ENCODE measurements at regions of chr9 and their contacts with region 1.

Region 1: DNA sequence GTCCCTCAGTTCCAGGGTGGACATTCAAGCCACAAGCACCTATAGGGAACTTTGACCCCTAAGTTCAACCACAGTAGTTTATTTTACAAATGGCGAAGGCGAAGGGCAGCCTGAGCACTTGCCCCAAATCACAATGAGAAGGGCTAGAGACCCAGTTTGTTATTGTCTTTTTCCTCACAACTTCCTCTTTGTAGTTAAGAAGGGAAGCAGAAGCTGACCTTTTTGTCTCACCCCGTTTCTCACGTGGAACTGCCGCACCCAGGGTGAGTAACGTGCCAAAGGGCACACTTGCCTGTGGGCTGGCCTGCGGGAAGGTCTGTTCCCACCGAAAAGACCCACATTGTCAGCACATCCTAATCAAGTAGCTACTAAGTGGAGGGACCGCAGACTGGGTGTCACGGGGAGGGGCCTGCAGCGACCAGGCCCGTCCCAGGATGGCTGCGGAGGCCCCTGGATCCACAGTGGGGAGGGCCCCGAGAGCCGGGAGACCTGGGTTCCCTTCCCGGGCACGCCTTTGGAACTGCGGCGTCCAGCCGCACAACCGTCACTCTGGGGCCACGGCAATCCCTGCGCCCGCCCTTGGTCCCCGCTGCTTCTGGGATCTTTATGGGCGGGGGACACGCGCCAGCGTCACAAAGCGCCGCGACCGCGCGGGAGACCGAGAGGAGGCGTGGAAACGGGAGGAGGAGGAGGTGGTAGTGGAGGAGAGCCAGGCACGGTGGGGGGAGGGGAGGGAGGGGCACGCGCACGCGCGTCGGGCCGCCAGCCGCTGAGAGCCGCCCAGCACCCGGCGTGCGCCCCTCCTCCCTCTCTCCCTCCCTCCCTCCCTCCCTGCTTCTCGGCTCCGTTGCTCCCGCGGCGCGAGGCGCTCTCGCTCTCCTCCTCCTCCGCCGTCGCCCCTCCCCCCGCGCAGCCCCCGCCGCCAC is at the start of gene UBE2R2:
- DNase-seq: peak; percentile 97
- ATAC-seq: peak; percentile 73
- H3K4me3 ChIP-seq: peak within 1 kb of the TSS; percentile 68 to 85 (median 78)
- H3K4me3 Mint-ChIP-seq: peak within 1 kb of the TSS; percentile 98
- H3K27ac ChIP-seq: peak within 1 kb of the TSS; percentile 99
- H3K27ac Mint-ChIP-seq: peak within 1 kb of the TSS; percentile 100
- H3K4me1 ChIP-seq: peaks cover 46 to 52% of the 10 kb centered on the region in 2 donors
- H3K4me1 Mint-ChIP-seq: peaks cover 64% of the 10 kb centered on the region
- H3K27me3 ChIP-seq: no peaks in the 10 kb centered on the region
- H3K27me3 Mint-ChIP-seq: no peaks in the 10 kb centered on the region
- CTCF ChIP-seq: no peak
- total RNA-seq, gene UBE2R2: 46.0 and 48.8 TPM in 2 replicates

Region 2: GRCh38 chr9:33623658-33624586 is 192.7 kb before region 1 on chr9:
- CTCF ChIA-PET with region 1: interaction called, 11 read pairs
- POLR2A ChIA-PET with region 1: no interaction called
- intact Hi-C with region 1: no loop called
- DNase-seq: peak; percentile 82
- ATAC-seq: peak; percentile 92
- H3K4me3 ChIP-seq: no peak overlapping the region
- H3K4me3 Mint-ChIP-seq: no peak overlapping the region
- H3K27ac ChIP-seq: no peak overlapping the region
- H3K27ac Mint-ChIP-seq: no peak overlapping the region
- H3K4me1 ChIP-seq: no peaks in the 10 kb centered on the region
- H3K4me1 Mint-ChIP-seq: no peaks in the 10 kb centered on the region
- H3K27me3 ChIP-seq: peaks cover 0 to 13% (median 7%) of the 10 kb centered on the region in 4 experiments
- H3K27me3 Mint-ChIP-seq: peaks cover 40% of the 10 kb centered on the region
- CTCF ChIP-seq: peak; percentile 87

Region 3: DNA sequence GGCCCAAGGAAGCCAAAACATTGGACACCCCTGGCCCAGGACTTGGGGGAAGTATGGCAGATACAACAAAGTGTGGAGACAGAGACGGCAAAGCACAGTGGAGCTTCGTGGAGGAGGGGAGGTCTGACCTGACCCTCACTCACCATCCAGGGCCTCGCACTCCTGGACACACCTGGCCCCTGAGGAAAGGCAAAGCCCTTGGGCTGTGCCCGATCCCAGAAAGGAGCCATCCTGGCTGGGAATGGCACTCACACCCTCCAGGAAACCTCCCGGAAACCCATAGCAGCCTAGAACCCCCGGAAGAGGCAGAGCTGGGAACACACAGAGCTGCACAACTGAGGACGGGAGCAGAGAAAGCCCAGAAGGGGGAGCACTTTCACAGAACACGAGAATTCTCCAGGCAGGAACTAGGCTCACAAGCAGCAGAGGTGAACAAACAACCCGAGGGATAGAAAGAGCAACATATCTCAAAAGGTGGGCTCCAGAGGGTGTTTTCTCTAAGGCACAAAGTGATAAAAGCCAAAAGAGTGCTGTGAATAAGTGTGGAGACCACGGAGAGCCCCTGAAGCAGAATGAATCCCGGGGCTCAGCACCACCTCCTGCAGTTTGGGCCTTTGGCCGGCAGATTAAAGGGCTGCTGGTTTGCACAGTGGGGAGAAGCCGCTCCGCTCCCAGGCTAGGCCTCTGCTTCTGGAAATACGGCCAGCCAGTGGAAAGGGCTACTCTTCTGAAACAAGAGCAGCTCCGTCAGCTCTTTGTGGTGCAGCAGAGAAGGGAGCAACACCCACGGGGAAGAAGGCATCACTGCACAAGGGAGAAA is 108.6 kb after region 1 on chr9:
- CTCF ChIA-PET with region 1: interaction called, 14 read pairs
- POLR2A ChIA-PET with region 1: no interaction called
- intact Hi-C with region 1: loop called (anchors 5 kb)
- DNase-seq: peak; percentile 35
- ATAC-seq: no peak
- H3K4me3 ChIP-seq: no peak overlapping the region
- H3K4me3 Mint-ChIP-seq: no peak overlapping the region
- H3K27ac ChIP-seq: no peak overlapping the region
- H3K27ac Mint-ChIP-seq: no peak overlapping the region
- H3K4me1 ChIP-seq: no peaks in the 10 kb centered on the region
- H3K4me1 Mint-ChIP-seq: no peaks in the 10 kb centered on the region
- H3K27me3 ChIP-seq: no peaks in the 10 kb centered on the region
- H3K27me3 Mint-ChIP-seq: no peaks in the 10 kb centered on the region
- CTCF ChIP-seq: peak; percentile 18

Region 4: DNA sequence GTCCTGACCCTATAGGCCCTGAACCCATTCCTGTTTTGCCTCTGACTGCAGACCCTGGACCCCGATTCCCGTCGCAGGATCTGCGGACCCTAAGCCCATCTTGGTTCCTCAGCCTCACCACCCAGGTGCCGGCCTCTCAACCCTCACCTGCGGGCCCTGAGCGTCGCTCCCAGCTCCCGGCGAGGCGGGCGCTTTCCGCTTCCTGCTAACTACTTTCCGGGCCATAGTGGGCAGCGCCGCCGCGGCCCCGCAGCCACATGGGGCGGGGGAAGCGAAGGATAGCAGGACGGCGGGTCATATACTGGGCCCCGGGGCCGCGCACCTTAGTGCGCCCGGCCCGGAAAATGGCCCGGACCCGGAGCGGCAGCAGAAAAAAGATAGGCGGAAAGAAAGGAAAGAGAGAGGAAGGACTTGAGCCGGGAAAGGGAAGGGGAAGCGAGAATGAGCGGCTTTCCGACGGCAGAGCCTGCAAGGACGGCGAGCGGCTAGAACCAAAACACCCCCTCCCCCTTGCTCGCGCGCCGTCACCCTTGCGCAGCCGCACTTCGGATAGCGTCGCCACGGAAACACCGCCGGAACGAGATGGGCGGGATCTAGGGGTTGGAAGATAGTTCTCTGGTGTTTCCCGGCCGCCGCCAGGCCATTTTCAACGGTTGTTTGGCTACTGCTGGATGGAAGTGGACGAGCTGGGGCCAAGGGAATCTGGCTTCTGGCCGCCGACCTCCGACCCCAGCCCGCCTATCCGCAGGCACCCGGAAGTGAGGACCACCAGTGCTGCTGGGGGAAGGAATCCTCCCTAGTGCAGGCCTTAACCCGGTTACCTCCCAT is 309.8 kb after region 1 on chr9 and contains the start of gene DCAF12:
- CTCF ChIA-PET with region 1: no interaction called
- POLR2A ChIA-PET with region 1: no interaction called
- intact Hi-C with region 1: loop called (anchors 2 kb)
- DNase-seq: peak; percentile 84
- ATAC-seq: peak; percentile 55
- H3K4me3 ChIP-seq: peak within 1 kb of the TSS; percentile 44 to 67 (median 58)
- H3K4me3 Mint-ChIP-seq: peak within 1 kb of the TSS; percentile 93
- H3K27ac ChIP-seq: no peak within 1 kb of the TSS
- H3K27ac Mint-ChIP-seq: peak within 1 kb of the TSS; percentile 60
- H3K4me1 ChIP-seq: peaks cover 51 to 55% of the 10 kb centered on the region in 2 donors
- H3K4me1 Mint-ChIP-seq: peaks cover 48% of the 10 kb centered on the region
- H3K27me3 ChIP-seq: peaks cover 0 to 81% (median 56%) of the 10 kb centered on the region in 4 experiments
- H3K27me3 Mint-ChIP-seq: peaks cover 50% of the 10 kb centered on the region
- CTCF ChIP-seq: no peak
- total RNA-seq, gene DCAF12: 1.9 and 2.3 TPM in 2 replicates

Region 5: DNA sequence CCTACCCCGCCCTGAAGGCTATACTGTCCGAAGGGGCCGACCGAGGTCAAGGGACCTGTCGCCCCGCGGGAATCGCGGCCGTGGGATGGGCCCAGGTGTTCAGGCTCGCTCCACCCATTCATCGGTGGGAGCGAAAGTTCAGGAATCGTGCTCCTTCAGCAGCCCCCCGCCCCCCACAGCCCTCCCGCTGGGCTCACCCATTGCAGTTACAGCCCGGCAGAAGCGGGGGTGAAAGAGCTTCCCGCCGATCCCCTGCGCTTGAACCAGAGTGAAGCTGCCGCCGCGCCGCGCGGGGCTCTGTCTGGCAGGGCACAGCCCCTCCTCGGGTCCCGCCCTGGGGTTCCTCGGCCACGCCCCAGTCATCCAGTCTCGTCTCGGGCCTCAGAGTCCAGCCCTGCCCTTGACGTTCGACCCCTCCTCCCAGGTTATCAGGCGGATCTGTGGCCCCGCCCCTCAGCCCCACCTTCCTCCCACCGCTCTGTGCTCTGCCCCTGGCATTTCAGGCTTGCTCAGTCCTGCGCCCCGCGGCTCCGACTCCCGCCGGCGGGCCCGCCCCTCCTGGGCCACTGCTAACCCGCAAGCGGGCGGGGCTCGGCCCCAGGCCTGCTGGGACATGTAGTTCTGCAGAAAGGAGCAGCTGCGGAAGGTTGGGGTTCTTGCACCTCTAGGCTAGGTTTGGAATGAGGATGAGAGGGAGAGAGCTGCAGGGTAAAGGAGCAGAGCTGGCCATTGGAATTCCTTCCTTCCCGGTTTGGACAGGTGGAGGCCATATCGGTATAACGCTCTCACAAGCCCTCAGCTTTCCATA is 560.2 kb after region 1 on chr9 and contains the start of gene MYORG:
- CTCF ChIA-PET with region 1: interaction called, 5 read pairs
- POLR2A ChIA-PET with region 1: no interaction called
- intact Hi-C with region 1: loop called (anchors 2 kb)
- DNase-seq: peak; percentile 97
- ATAC-seq: peak; percentile 85
- H3K4me3 ChIP-seq: peak within 1 kb of the TSS; percentile 69 to 85 (median 80)
- H3K4me3 Mint-ChIP-seq: peak within 1 kb of the TSS; percentile 98
- H3K27ac ChIP-seq: no peak within 1 kb of the TSS
- H3K27ac Mint-ChIP-seq: peak within 1 kb of the TSS; percentile 91
- H3K4me1 ChIP-seq: peaks cover 29 to 43% of the 10 kb centered on the region in 2 donors
- H3K4me1 Mint-ChIP-seq: peaks cover 39% of the 10 kb centered on the region
- H3K27me3 ChIP-seq: peaks cover 0 to 15% (median 4%) of the 10 kb centered on the region in 4 experiments
- H3K27me3 Mint-ChIP-seq: no peaks in the 10 kb centered on the region
- CTCF ChIP-seq: peak; percentile 29
- total RNA-seq, gene MYORG: 0.37 and 0.49 TPM in 2 replicates

Region 6: GRCh38 chr9:34989003-34989945 is 1172.7 kb after region 1 on chr9 and contains the start of gene DNAJB5:
- CTCF ChIA-PET with region 1: no interaction called
- POLR2A ChIA-PET with region 1: no interaction called
- intact Hi-C with region 1: loop called (anchors 10 kb)
- DNase-seq: peak; percentile 98
- ATAC-seq: peak; percentile 96
- H3K4me3 ChIP-seq: peak within 1 kb of the TSS; percentile 74 to 95 (median 84)
- H3K4me3 Mint-ChIP-seq: peak within 1 kb of the TSS; percentile 94
- H3K27ac ChIP-seq: peak within 1 kb of the TSS; percentile 11 to 68
- H3K27ac Mint-ChIP-seq: peak within 1 kb of the TSS; percentile 78
- H3K4me1 ChIP-seq: peaks cover 42 to 51% of the 10 kb centered on the region in 2 donors
- H3K4me1 Mint-ChIP-seq: peaks cover 45% of the 10 kb centered on the region
- H3K27me3 ChIP-seq: no peaks in the 10 kb centered on the region
- H3K27me3 Mint-ChIP-seq: no peaks in the 10 kb centered on the region
- CTCF ChIP-seq: no peak
- total RNA-seq, gene DNAJB5: 1.0 and 2.4 TPM in 2 replicates

Measured in B cell (primary cell).